Right cardiac atrium (tissue), 5 donors: ENCODE measurements at regions of chr2 and their contacts with region 1.

Region 1: DNA sequence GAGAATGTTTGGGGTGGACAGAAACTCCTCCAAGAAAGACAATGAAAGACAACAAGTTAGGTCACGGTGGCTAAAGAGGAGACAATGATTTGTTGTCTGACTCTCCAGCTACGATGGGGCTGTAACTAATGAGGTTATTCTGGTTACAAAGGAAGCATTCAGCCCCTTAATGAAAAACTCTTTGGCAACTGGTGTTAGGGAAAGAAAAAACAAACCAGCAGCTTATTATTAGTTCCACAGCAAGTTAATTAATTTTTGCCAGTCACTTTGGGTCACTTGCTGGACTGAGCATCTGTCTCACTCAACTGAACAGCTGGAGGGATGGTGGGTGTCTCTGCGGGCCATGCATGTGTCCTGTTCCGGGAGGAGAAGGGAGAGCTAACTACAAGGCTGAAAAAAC is 263.7 kb downstream of the ALK start:
- DNase-seq: no peak
- ATAC-seq: no peak
- H3K4me3 ChIP-seq: no peak overlapping the region
- H3K27ac ChIP-seq: no peak overlapping the region
- H3K4me1 ChIP-seq: no peaks in the 10 kb centered on the region
- H3K27me3 ChIP-seq: no peaks in the 10 kb centered on the region

Region 2: DNA sequence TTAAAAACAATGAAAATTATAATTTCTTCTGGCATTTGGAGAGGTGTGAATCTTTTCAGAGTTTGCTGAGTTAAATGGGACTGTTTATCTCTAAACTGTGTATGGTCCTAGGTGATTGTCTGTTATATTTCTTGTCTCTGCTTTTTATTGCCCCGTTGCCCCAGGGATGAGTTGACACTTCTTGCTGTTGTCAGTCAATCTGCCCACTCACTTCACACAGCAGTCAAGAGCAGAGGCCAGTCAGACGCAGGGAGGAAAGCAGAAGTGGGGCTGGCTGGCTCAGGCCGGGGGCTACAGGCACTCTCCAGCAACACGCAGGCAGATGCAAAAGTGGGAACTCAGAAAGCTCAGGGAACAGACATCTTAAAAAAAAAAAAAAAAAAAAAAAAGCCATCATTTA is 177.2 kb before region 1 on chr2:
- intact Hi-C with region 1: loop called in 1 of 4 experiments (anchors 10 kb)
- DNase-seq: peak in 2 of 3 donors; percentile 29 to 60
- ATAC-seq: peak; percentile 55 to 57
- H3K4me3 ChIP-seq: no peak overlapping the region
- H3K27ac ChIP-seq: no peak overlapping the region
- H3K4me1 ChIP-seq: no peaks in the 10 kb centered on the region
- H3K27me3 ChIP-seq: no peaks in the 10 kb centered on the region

Region 3: DNA sequence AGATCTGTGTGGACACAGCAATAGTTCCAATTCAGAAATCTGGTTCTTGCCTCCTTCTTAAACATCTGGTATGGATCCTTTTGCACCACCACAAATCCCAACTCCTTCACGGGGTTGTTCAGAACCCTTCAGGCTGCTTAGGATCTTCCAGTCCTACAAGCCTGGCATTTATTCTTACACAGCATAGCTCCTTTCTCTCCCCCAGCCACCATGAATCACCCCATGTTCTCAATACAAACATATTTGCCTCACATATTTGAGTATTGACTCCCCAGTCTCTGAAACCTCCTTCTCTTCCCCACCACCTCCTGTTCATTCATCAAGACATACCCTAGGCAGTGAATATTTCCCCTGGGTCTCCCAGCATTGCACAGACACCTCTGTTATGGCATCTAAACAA is 108.5 kb after region 1 on chr2:
- intact Hi-C with region 1: no loop called
- DNase-seq: no peak
- ATAC-seq: no peak
- H3K4me3 ChIP-seq: no peak overlapping the region
- H3K27ac ChIP-seq: no peak overlapping the region
- H3K4me1 ChIP-seq: no peaks in the 10 kb centered on the region
- H3K27me3 ChIP-seq: no peaks in the 10 kb centered on the region